Astrocyte of the cerebellum (primary cell): ENCODE measurements at regions of chr7 and their contacts with region 1.

Region 1: DNA sequence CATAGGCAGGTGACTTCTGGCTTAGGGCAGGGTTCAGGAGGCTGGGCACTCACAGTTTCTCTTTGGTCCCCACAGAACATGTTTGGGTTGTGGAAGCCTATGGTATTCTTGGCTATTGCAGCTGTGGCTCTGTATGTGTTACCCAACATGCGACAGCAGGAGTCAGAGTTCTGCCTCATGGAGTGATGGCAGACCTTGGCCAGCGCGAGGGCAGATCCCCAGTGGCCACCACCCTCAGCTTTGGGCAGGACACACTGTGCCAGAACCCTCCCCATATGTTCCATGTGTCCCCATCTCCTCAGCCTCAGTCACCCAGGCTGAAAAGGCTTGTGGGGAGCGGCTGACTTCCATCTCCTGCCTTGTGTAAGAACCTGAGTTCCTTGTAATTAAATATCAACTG is 8.5 kb upstream of the FLNC start:
- DNase-seq: no peak
- H3K4me3 ChIP-seq: no peak overlapping the region
- CTCF ChIP-seq: no peak

Region 2: DNA sequence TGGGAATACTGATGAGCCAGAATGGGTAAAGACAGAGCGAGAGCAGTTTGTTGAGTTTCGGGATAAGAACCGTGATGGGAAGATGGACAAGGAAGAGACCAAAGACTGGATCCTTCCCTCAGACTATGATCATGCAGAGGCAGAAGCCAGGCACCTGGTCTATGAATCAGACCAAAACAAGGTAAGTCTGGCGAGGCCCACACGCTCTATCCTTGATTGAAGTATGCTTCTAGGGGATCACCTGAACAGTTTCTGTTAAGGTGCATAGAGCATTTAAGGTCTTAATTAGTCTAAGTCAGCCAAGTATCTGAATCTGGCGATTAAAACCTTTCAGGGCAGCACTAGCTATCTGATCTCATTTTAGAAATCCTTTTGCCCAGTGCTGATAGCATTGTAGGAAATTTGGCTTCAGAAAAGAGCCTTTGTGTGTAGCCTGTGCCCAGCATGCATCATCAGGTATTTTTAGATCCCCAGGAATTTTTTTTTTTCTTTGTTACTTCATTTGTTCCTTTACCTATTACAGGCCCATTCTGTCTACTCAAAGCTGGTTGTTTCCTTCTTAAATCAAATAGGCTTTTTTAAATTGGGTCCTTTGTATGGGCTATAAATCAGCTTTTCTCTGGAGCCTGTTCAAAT is 54.1 kb before region 1 on chr7:
- in situ Hi-C with region 1: loop called (anchors 5 kb)
- DNase-seq: no peak
- H3K4me3 ChIP-seq: no peak overlapping the region
- CTCF ChIP-seq: no peak